CD4-positive, alpha-beta memory T cell (primary cell): ENCODE measurements at regions of chr1 and their contacts with region 1.

Region 1: GRCh38 chr1:1291548-1292441 is 11.6 kb downstream of the SCNN1D start:
- DNase-seq: peak; percentile 60 to 71 (median 69)
- H3K4me3 ChIP-seq: no peak overlapping the region
- H3K4me3 Mint-ChIP-seq: no peak overlapping the region
- H3K27ac ChIP-seq: no peak overlapping the region
- H3K27ac Mint-ChIP-seq: peak overlapping the region in 1 of 7 donors; percentile 16
- H3K4me1 ChIP-seq: no peaks in the 10 kb centered on the region
- H3K4me1 Mint-ChIP-seq: peaks cover 0 to 3% (median under 1%) of the 10 kb centered on the region in 4 donors
- H3K27me3 ChIP-seq: no peaks in the 10 kb centered on the region
- H3K27me3 Mint-ChIP-seq: no peaks in the 10 kb centered on the region

Region 2: DNA sequence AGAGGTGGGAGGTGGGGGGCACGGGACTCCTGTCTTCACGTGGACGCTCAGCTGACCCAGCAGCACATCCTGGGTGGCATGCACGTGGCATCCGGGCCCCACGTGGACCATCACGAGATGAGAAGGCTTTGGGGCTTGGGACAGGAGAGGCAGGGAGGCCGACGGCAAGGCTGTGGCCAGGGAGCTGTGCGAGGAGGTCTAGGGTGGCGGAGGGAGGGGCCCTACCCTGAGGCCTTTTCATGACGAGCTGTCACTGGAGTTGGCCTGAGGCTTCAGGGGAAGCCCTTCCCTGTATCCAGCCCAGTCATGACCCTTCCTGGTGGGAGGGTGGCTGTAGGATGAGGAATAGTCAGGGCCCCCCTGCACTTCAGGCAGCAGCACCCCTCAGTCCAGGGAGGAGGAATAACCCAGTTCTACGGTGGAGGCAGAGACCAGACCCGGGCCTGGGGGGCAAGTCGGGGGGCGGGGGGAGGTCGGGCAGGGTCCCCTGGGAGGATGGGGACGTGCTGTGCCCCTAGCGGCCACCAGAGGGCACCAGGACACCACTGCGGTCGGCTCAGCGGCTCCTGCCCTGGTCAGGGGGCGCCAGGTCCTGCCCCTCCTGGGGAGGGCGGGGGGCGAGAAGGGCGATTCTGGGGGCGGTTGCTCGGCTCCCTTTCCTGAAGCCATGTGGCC is 307.9 kb before region 1 on chr1:
- CTCF ChIA-PET with region 1: interaction called, 6 read pairs
- POLR2A ChIA-PET with region 1: no interaction called
- intact Hi-C with region 1: loop called (anchors 5 kb)
- DNase-seq: peak in 4 of 5 donors; percentile 40 to 63 (median 47)
- H3K4me3 ChIP-seq: no peak overlapping the region
- H3K4me3 Mint-ChIP-seq: no peak overlapping the region
- H3K27ac ChIP-seq: no peak overlapping the region
- H3K27ac Mint-ChIP-seq: no peak overlapping the region
- H3K4me1 ChIP-seq: no peaks in the 10 kb centered on the region
- H3K4me1 Mint-ChIP-seq: no peaks in the 10 kb centered on the region
- H3K27me3 ChIP-seq: no peaks in the 10 kb centered on the region
- H3K27me3 Mint-ChIP-seq: peaks cover 18 to 27% of the 10 kb centered on the region in 2 donors

Region 3: GRCh38 chr1:1157033-1157365 is 134.8 kb before region 1 on chr1:
- CTCF ChIA-PET with region 1: no interaction called
- POLR2A ChIA-PET with region 1: no interaction called
- intact Hi-C with region 1: no loop called
- DNase-seq: no peak
- H3K4me3 ChIP-seq: no peak overlapping the region
- H3K4me3 Mint-ChIP-seq: peak overlapping the region in 7 of 8 donors; percentile 9 to 81 (median 43)
- H3K27ac ChIP-seq: no peak overlapping the region
- H3K27ac Mint-ChIP-seq: peak overlapping the region in 4 of 7 donors; percentile 12 to 58 (median 50)
- H3K4me1 ChIP-seq: peaks cover 8% of the 10 kb centered on the region
- H3K4me1 Mint-ChIP-seq: peaks cover 0 to 14% (median 4%) of the 10 kb centered on the region in 4 donors
- H3K27me3 ChIP-seq: no peaks in the 10 kb centered on the region
- H3K27me3 Mint-ChIP-seq: no peaks in the 10 kb centered on the region